ACHN (cell line): ENCODE measurements at regions of chr17 and their contacts with region 1.

Region 1: GRCh38 chr17:16521070-16521727 is 29.2 kb upstream of the LRRC75A start:
- DNase-seq: peak; percentile 91

Region 2: DNA sequence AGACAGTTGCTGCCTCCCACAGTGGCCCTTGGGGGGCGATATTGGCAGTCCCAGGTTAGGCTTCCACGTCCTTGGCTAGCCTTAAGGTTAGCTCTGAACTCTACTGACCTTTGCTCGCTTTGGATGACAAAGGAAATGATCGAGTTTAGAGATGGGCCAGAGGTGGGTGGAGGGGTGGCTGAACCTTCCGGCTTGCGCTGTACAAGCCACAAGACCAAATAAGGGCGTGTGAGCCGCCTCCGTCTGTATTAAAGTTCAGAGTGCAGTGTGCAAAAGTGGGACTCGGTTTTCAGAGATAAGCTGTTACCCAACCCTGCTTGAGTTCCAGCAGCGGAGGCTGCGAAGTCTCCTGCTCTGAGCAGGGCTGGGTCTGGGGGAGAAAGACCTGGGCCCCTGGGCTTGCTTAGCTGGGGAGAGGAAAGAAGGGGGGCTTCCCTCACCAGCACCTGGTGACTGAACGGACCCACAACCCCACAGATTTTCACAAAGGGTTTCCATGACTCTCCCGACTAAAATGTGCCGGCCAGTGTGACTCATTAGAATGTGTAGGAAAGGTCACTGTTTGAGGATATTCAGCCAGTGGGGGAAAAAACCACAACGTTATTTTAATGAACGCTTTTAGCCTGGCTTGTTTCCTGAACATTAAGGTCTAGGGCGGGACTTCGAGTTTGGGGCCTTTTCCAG is 235.1 kb before region 1 on chr17:
- in situ Hi-C with region 1: loop called (anchors 25 kb)
- DNase-seq: peak; percentile 98

Region 3: GRCh38 chr17:16380640-16381495 is 140.3 kb before region 1 on chr17 and contains the start of gene UBB:
- in situ Hi-C with region 1: loop called (anchors 25 kb)
- DNase-seq: peak; percentile 98

Region 4: DNA sequence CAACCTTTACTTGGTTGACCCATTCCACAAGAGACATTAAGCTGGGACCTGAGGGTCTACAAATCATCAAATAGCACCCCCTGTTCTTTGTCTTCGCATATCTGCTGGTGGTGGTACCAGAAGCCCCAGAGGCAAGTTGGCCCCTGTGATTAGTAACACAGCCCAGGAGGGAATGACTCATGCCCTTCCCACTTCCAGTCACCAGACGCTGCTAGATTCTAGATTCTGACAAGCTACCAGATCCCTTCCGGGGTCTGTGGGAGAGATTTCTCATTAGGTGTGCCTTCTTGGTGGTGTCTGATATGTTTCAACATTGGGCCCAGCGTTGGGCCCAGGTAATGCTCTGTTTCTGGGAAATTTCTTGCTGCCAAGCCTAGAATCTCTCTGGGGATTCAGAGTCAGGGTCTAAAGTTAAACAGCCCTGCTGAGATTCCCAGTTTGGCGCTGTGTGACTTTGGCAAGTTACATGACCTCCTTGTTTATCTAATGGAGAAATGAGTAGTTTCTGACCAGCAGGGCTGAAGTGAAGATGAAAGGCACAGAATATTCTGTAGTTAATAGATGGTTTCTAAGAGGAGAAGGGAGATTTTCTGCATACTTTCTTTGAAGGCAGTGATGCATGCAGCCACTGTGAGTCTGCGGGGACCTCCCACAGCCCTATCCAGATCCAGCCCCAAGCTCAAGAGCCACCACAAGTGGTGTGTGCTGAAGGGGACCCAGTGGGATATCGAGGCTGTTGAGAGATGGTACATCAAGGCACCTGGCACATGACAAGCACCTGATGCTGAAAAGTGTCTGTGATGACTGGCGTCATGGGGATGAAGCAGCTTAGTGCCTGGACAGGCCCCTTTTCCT is 101.9 kb before region 1 on chr17:
- in situ Hi-C with region 1: no loop called
- DNase-seq: peak; percentile 94